ENCODE measurements at regions of chr4 and their contacts with region 1.

Region 1: GRCh38 chr4:111641955-111642579 is 503.2 kb upstream of the FAM241A start:
- DNase-seq: peak; percentile 91
- H3K4me3 Mint-ChIP-seq: no peak overlapping the region
- H3K27ac Mint-ChIP-seq: no peak overlapping the region
- H3K4me1 Mint-ChIP-seq: peaks cover 8% of the 10 kb centered on the region
- H3K27me3 Mint-ChIP-seq: peaks cover 4% of the 10 kb centered on the region
- CTCF ChIP-seq: peak; percentile 82

Region 2: GRCh38 chr4:111405989-111406388 is 236.1 kb before region 1 on chr4:
- CTCF ChIA-PET with region 1: no interaction called
- POLR2A ChIA-PET with region 1: no interaction called
- intact Hi-C with region 1: no loop called
- DNase-seq: no peak
- H3K4me3 Mint-ChIP-seq: no peak overlapping the region
- H3K27ac Mint-ChIP-seq: no peak overlapping the region
- H3K4me1 Mint-ChIP-seq: peaks cover 3% of the 10 kb centered on the region
- H3K27me3 Mint-ChIP-seq: no peaks in the 10 kb centered on the region
- CTCF ChIP-seq: no peak

Region 3: GRCh38 chr4:111798840-111799239 is 156.8 kb after region 1 on chr4:
- CTCF ChIA-PET with region 1: interaction called, 5 read pairs
- POLR2A ChIA-PET with region 1: no interaction called
- intact Hi-C with region 1: loop called (anchors 1 kb)
- DNase-seq: peak; percentile 25
- H3K4me3 Mint-ChIP-seq: no peak overlapping the region
- H3K27ac Mint-ChIP-seq: no peak overlapping the region
- H3K4me1 Mint-ChIP-seq: no peaks in the 10 kb centered on the region
- H3K27me3 Mint-ChIP-seq: peaks cover 71% of the 10 kb centered on the region
- CTCF ChIP-seq: peak; percentile 29

Region 4: GRCh38 chr4:111937368-111937767 is 295.3 kb after region 1 on chr4:
- CTCF ChIA-PET with region 1: interaction called, 6 read pairs
- POLR2A ChIA-PET with region 1: no interaction called
- intact Hi-C with region 1: loop called (anchors 1 kb)
- DNase-seq: peak; percentile 69
- H3K4me3 Mint-ChIP-seq: no peak overlapping the region
- H3K27ac Mint-ChIP-seq: no peak overlapping the region
- H3K4me1 Mint-ChIP-seq: no peaks in the 10 kb centered on the region
- H3K27me3 Mint-ChIP-seq: peaks cover 55% of the 10 kb centered on the region
- CTCF ChIP-seq: peak; percentile 27

Measured in MCF 10A (cell line).